IMR-90 (cell line): ENCODE measurements at regions of chr4 and their contacts with region 1.

Region 1: GRCh38 chr4:119628308-119629141 is at the start of gene PDE5A:
- DNase-seq: peak; percentile 80
- ATAC-seq: peak; percentile 56
- H3K4me3 ChIP-seq: peak within 1 kb of the TSS; percentile 93
- H3K27ac ChIP-seq: peak within 1 kb of the TSS; percentile 96
- H3K4me1 ChIP-seq: peaks cover 11% of the 10 kb centered on the region
- H3K27me3 ChIP-seq: no peaks in the 10 kb centered on the region
- CTCF ChIP-seq: peak; percentile 80
- POLR2A ChIP-seq: no peak
- RAD21 ChIP-seq: peak; percentile 90
- total RNA-seq, gene PDE5A: 567 and 770 TPM in 2 replicates

Region 2: DNA sequence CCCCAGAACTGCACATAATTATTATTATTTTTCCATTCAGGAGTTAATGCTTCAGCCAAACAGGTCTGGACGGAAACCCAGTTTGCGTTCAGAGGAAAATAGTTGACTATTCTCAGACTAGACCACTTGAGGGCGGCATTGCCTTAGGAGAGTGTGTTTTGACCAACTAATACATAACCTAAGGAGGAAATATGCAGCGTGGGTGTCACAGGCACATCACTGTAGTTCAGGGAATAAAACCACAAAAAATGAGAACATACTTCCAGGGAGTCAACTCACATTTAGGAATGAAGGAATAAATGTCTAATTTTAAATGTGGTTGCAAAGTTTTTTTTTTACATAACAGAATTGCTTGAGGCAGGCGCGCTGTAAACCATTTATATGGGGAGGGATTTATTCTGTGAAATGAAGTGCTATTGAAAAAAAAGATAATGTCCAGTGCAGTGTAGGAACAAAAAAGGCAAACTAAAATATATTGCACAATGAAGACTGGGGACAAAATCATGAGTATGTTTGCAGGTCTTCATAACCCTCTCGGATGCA is 646.6 kb before region 1 on chr4:
- CTCF ChIA-PET with region 1: no interaction called
- POLR2A ChIA-PET with region 1: no interaction called
- dilution Hi-C with region 1: no loop called
- in situ Hi-C with region 1: no loop called
- intact Hi-C with region 1: loop called (anchors 5 kb)
- DNase-seq: peak; percentile 96
- ATAC-seq: peak; percentile 89
- H3K4me3 ChIP-seq: no peak overlapping the region
- H3K27ac ChIP-seq: peak overlapping the region; percentile 21; the same call in 1 of the 2 replicates
- H3K4me1 ChIP-seq: peaks cover 18% of the 10 kb centered on the region
- H3K27me3 ChIP-seq: no peaks in the 10 kb centered on the region
- CTCF ChIP-seq: peak; percentile 92
- POLR2A ChIP-seq: no peak
- RAD21 ChIP-seq: peak; percentile 98

Region 3: DNA sequence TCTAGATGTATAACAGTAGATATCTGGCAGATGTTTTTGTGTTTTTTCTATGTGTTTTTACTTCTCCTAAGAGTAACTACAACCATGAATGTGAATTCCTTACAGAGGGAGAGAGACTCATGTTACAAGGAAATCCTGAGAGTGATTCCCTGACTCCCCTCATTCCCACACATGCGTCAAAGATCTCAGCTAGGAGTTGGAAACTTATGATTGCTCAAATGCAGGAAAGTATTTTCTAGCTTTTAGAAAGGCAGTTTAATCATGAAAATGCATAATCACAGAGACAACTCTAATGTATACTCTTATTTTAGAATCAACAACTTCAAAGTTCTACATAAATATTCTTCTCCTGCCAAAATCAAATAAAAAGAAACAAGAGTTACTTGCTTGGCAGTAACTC is 121.7 kb before region 1 on chr4:
- CTCF ChIA-PET with region 1: no interaction called
- POLR2A ChIA-PET with region 1: no interaction called
- dilution Hi-C with region 1: no loop called
- in situ Hi-C with region 1: no loop called
- intact Hi-C with region 1: no loop called
- DNase-seq: peak; percentile 63
- ATAC-seq: peak; percentile 6; the same call in 1 of the 2 replicates
- H3K4me3 ChIP-seq: no peak overlapping the region
- H3K27ac ChIP-seq: peak overlapping the region; percentile 46; the same call in 1 of the 2 replicates
- H3K4me1 ChIP-seq: peaks cover 5% of the 10 kb centered on the region
- H3K27me3 ChIP-seq: no peaks in the 10 kb centered on the region
- CTCF ChIP-seq: no peak
- POLR2A ChIP-seq: no peak
- RAD21 ChIP-seq: no peak

Region 4: DNA sequence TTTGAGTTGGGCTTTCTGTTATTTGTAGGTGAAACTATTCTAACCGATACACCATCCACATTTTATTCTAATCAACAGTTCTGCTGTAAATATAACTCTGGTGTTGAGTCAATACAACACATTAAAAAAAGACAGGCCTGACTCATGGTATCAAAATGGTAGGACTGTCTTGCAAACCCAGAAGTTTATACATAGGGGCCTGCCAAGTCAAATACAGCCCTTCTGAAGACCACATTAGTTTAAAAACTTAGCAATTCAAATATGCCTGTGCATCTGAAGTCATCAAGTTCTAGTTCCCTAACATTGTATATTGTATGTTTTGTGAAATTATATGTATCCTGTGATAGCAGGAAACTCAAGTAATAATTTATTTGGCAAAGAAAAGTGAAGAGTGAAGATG is 24.5 kb after region 1 on chr4:
- CTCF ChIA-PET with region 1: interaction called, 6 read pairs
- POLR2A ChIA-PET with region 1: interaction called, 24 read pairs
- dilution Hi-C with region 1: no loop called
- in situ Hi-C with region 1: no loop called
- intact Hi-C with region 1: loop called (anchors 1 kb)
- DNase-seq: peak; percentile 93
- ATAC-seq: peak; percentile 69
- H3K4me3 ChIP-seq: no peak overlapping the region
- H3K27ac ChIP-seq: peak overlapping the region; percentile 97; the same call in 1 of the 2 replicates
- H3K4me1 ChIP-seq: peaks cover 17% of the 10 kb centered on the region
- H3K27me3 ChIP-seq: no peaks in the 10 kb centered on the region
- CTCF ChIP-seq: no peak
- POLR2A ChIP-seq: no peak
- RAD21 ChIP-seq: no peak

Region 5: GRCh38 chr4:119692001-119692400 is 63.5 kb after region 1 on chr4:
- CTCF ChIA-PET with region 1: interaction called, 7 read pairs
- POLR2A ChIA-PET with region 1: interaction called, 7 read pairs
- dilution Hi-C with region 1: no loop called
- in situ Hi-C with region 1: no loop called
- intact Hi-C with region 1: loop called (anchors 2 kb)
- DNase-seq: peak; percentile 67
- ATAC-seq: peak; percentile 62
- H3K4me3 ChIP-seq: no peak overlapping the region
- H3K27ac ChIP-seq: peak overlapping the region; percentile 36; the same call in 1 of the 2 replicates
- H3K4me1 ChIP-seq: peaks cover 9% of the 10 kb centered on the region
- H3K27me3 ChIP-seq: no peaks in the 10 kb centered on the region
- CTCF ChIP-seq: peak; percentile 51
- POLR2A ChIP-seq: no peak
- RAD21 ChIP-seq: peak; percentile 63

Region 6: GRCh38 chr4:119715490-119716445 is 87.2 kb after region 1 on chr4:
- CTCF ChIA-PET with region 1: no interaction called
- POLR2A ChIA-PET with region 1: no interaction called
- dilution Hi-C with region 1: no loop called
- in situ Hi-C with region 1: no loop called
- intact Hi-C with region 1: no loop called
- DNase-seq: no peak
- ATAC-seq: no peak
- H3K4me3 ChIP-seq: no peak overlapping the region
- H3K27ac ChIP-seq: no peak overlapping the region
- H3K4me1 ChIP-seq: no peaks in the 10 kb centered on the region
- H3K27me3 ChIP-seq: no peaks in the 10 kb centered on the region
- CTCF ChIP-seq: no peak
- POLR2A ChIP-seq: no peak
- RAD21 ChIP-seq: no peak

Region 7: DNA sequence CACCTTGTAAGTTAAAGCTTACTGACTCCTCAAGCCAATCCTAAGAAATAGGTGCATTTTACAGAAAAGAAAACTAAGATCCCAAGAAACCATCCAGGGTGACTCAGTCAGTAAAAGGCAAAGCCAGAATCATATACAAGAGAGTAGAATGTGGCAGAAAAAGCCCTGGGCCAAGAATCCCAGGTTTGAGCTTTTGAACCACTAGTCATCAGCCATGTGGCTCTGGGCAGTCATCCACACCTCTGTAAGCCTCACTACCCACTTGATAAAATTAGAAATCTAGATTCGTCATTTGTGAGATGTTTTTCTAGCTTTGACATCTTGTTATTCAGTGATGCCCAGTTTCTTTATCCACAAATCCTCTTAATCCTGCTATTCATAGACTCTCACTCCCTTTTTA is 122.2 kb after region 1 on chr4:
- CTCF ChIA-PET with region 1: interaction called, 4 read pairs
- POLR2A ChIA-PET with region 1: interaction called, 11 read pairs
- dilution Hi-C with region 1: no loop called
- in situ Hi-C with region 1: no loop called
- intact Hi-C with region 1: no loop called
- DNase-seq: peak; percentile 75
- ATAC-seq: peak; percentile 51
- H3K4me3 ChIP-seq: no peak overlapping the region
- H3K27ac ChIP-seq: peak overlapping the region; percentile 55; the same call in 1 of the 2 replicates
- H3K4me1 ChIP-seq: peaks cover 9% of the 10 kb centered on the region
- H3K27me3 ChIP-seq: no peaks in the 10 kb centered on the region
- CTCF ChIP-seq: no peak
- POLR2A ChIP-seq: no peak
- RAD21 ChIP-seq: no peak

Region 8: DNA sequence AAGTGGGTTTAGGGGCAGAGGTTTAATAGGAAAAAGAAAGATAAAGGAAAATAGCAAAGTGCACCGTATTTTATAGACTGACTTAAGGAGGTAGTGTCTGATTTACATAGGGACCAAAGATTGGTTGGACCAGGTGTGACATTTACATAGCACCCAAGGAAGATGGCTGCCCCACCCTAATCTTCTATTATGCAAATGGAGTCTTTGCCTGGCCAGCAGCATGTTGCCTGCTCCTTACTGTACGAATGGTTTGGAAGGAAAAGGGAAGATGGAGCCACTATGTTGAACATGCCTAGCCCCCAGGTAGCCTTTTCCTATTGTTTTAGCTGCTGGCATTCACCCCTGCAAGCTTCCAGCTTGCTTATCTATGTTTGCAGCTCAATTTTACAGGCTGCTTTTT is 146.3 kb after region 1 on chr4:
- CTCF ChIA-PET with region 1: no interaction called
- POLR2A ChIA-PET with region 1: no interaction called
- dilution Hi-C with region 1: no loop called
- in situ Hi-C with region 1: no loop called
- intact Hi-C with region 1: no loop called
- DNase-seq: no peak
- ATAC-seq: no peak
- H3K4me3 ChIP-seq: no peak overlapping the region
- H3K27ac ChIP-seq: no peak overlapping the region
- H3K4me1 ChIP-seq: no peaks in the 10 kb centered on the region
- H3K27me3 ChIP-seq: no peaks in the 10 kb centered on the region
- CTCF ChIP-seq: no peak
- POLR2A ChIP-seq: no peak
- RAD21 ChIP-seq: no peak

Region 9: GRCh38 chr4:119872371-119873031 is 244.0 kb after region 1 on chr4:
- CTCF ChIA-PET with region 1: no interaction called
- POLR2A ChIA-PET with region 1: no interaction called
- dilution Hi-C with region 1: no loop called
- in situ Hi-C with region 1: no loop called
- intact Hi-C with region 1: loop called (anchors 5 kb)
- DNase-seq: no peak
- ATAC-seq: no peak
- H3K4me3 ChIP-seq: no peak overlapping the region
- H3K27ac ChIP-seq: no peak overlapping the region
- H3K4me1 ChIP-seq: 0 out of 2 replicates have a peak, but pooled peaks cover 2% of the 10 kb centered on the region
- H3K27me3 ChIP-seq: no peaks in the 10 kb centered on the region
- CTCF ChIP-seq: no peak
- POLR2A ChIP-seq: no peak
- RAD21 ChIP-seq: no peak